ENCODE measurements at regions of chr6 and their contacts with region 1.

Region 1: GRCh38 chr6:85678602-85679444 is 36.1 kb upstream of the SYNCRIP start:
- DNase-seq: peak; percentile 96
- ATAC-seq: peak; percentile 78
- H3K4me3 ChIP-seq: peak overlapping the region; percentile 88 to 97
- H3K27ac ChIP-seq: peak overlapping the region; percentile 89
- H3K4me1 ChIP-seq: peaks cover 10 to 56% of the 10 kb centered on the region in 2 experiments; a peak in 3 of 4 replicates
- H3K27me3 ChIP-seq: no peaks in the 10 kb centered on the region
- CTCF ChIP-seq: 0 out of 6 replicates have a peak, but pooled peaks of 1 of the 3 experiments have one; percentile 15
- POLR2A ChIP-seq: peak; percentile 100
- RAD21 ChIP-seq: no peak

Region 2: GRCh38 chr6:85354761-85355618 is 323.8 kb before region 1 on chr6:
- CTCF ChIA-PET with region 1: no interaction called
- POLR2A ChIA-PET with region 1: interaction called, 7 read pairs
- RAD21 ChIA-PET with region 1: no interaction called
- intact Hi-C with region 1: loop called (anchors 5 kb)
- DNase-seq: peak; percentile 57
- ATAC-seq: peak; percentile 94
- H3K4me3 ChIP-seq: no peak overlapping the region
- H3K27ac ChIP-seq: no peak overlapping the region
- H3K4me1 ChIP-seq: peaks cover 0 to 34% of the 10 kb centered on the region in 2 experiments; a peak in 2 of 4 replicates
- H3K27me3 ChIP-seq: no peaks in the 10 kb centered on the region
- CTCF ChIP-seq: peak; percentile 90 to 93 (median 91)
- POLR2A ChIP-seq: no peak
- RAD21 ChIP-seq: peak; percentile 96

Region 3: DNA sequence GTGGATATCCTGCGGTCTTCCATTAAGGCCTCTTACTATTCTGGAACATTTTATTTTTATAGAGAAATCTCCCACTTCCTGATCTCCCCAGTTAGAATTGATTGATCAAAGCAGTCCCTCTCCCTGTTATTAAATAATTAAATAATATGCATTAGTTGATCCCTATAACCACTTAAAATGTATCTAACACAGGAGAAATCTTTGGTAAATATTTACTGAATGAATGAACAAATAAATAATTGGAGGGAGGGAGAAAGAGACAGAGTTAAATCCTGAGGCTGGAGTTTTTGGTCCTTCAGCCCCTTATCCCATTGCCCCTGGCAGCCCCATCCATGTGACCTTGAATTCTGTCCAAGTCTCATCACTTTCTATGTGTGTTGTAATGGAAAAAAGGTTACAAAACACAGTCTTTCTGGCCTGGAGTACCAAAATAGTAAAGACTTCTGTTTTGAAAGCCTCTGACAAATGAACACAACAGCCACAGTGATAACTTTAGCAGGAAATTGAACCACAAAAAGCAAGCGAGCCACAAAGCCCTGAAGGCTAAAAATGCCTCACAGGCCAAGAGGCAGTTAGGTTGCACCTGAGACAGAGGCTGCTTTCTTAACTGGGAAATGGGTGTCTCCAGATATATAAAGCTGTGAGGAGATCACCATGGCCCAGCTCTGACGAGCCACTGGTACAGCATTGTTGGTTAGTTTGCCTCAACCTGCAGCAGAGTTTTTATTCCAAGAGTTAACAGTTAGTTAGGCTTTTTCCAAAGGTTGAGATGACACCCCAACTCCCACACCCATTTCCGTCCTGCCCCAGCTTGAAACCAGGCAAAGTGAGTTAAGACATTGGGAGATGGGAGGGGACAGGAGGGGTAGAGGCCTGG is 217.7 kb before region 1 on chr6:
- CTCF ChIA-PET with region 1: no interaction called
- POLR2A ChIA-PET with region 1: interaction called, 8 read pairs
- RAD21 ChIA-PET with region 1: no interaction called
- intact Hi-C with region 1: loop called (anchors 10 kb)
- DNase-seq: no peak
- ATAC-seq: no peak
- H3K4me3 ChIP-seq: no peak overlapping the region
- H3K27ac ChIP-seq: no peak overlapping the region
- H3K4me1 ChIP-seq: peaks cover 61 to 100% of the 10 kb centered on the region in 2 experiments
- H3K27me3 ChIP-seq: no peaks in the 10 kb centered on the region
- CTCF ChIP-seq: no peak
- POLR2A ChIP-seq: no peak
- RAD21 ChIP-seq: no peak

Region 4: DNA sequence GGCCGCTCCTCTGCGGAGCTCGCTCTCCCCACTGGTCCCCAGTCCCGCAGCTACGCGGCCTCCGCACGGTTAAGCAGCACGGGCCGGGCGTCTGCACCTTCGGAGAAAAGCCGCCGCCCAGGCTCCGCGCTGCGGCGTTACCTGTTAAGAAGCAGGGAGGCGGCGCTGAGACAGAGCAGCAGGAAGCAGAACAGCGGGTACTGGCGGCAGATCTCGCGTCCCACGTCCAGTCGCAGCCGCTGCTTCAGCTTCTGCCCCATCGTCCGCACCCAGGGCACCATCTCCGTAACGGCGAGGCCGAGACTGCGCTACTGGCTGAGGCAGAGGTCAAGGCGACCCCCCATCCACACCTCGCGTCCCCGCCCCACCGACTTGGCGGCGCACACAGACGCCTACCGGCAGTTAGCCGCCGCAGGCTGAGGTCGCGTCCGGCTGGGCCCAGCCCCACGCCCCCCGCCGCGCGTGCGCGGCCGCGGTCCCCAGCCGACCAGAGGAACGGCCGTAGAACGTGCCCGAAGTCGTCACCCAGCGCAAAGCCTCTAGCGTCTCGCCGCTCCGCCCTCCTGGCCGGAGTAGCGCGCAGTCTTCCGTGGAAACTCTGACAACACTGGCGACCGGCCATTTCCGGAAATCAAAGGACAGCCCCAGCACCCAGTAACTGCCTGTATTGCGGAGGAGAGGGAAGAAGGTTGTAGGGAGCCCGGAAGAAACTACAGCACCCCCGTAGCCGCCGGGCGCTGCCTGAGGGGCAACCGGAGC is 85.2 kb before region 1 on chr6 and contains the start of gene SNX14:
- CTCF ChIA-PET with region 1: no interaction called
- POLR2A ChIA-PET with region 1: interaction called, 3 read pairs
- RAD21 ChIA-PET with region 1: no interaction called
- intact Hi-C with region 1: loop called (anchors 5 kb)
- DNase-seq: peak; percentile 92
- ATAC-seq: peak; percentile 93
- H3K4me3 ChIP-seq: peak within 1 kb of the TSS; percentile 75 to 88
- H3K27ac ChIP-seq: peak within 1 kb of the TSS; percentile 90
- H3K4me1 ChIP-seq: peaks cover 4 to 17% of the 10 kb centered on the region in 2 experiments; a peak in 3 of 4 replicates
- H3K27me3 ChIP-seq: no peaks in the 10 kb centered on the region
- CTCF ChIP-seq: no peak
- POLR2A ChIP-seq: peak; percentile 68
- RAD21 ChIP-seq: no peak
- total RNA-seq, gene SNX14: 84.8 TPM

Region 5: DNA sequence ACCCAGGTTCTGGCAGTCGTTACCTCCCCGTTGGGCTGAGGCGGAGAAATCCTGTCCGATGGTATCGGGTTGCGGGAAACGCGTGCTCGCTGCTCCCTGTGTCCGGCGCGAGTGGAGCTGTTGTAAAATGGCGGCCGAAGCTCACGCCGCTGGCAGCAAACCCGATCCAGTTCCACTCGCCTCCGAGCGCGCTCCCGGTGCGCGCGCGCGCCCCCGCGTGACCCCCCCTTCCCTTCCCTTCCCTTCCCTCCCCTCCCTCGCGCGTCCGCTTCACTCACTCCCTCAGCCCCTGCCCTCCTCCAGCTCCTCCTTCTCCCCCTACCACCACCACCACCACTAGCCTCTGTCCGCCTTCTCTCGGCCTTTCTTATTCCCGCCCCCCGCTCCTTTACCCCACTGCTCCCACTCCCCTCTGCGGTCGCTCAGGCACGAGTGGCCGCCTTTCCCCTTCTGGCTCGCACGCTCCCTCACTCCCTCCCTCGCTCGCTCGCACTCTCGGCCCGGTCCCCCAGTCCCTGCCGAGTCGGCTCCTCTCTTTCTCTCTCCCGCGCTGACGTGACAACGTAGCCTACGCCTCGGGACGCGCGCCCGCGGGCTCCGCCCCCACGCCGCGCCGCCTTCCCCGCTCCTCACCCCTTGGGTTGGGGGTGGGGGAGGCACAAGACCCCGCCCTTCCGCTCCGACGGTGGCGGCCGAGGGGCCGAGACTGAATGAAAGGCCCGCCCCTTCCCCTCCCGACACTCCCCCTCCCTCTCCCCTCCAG is 35.9 kb before region 1 on chr6 and contains the start of gene SYNCRIP:
- CTCF ChIA-PET with region 1: no interaction called
- POLR2A ChIA-PET with region 1: interaction called, 192 read pairs
- RAD21 ChIA-PET with region 1: interaction called, 3 to 4 read pairs
- intact Hi-C with region 1: loop called (anchors 1 kb)
- DNase-seq: peak; percentile 94
- ATAC-seq: peak; percentile 81
- H3K4me3 ChIP-seq: peak within 1 kb of the TSS; percentile 98 to 99
- H3K27ac ChIP-seq: peak within 1 kb of the TSS; percentile 99
- H3K4me1 ChIP-seq: peaks cover 9 to 35% of the 10 kb centered on the region in 2 experiments; a peak in 3 of 4 replicates
- H3K27me3 ChIP-seq: no peaks in the 10 kb centered on the region
- CTCF ChIP-seq: no peak
- POLR2A ChIP-seq: peak; percentile 87
- RAD21 ChIP-seq: no peak
- total RNA-seq, gene SYNCRIP: 189 TPM

Region 6: GRCh38 chr6:85660181-85660611 is 18.6 kb before region 1 on chr6:
- CTCF ChIA-PET with region 1: no interaction called
- POLR2A ChIA-PET with region 1: interaction called, 20 read pairs
- RAD21 ChIA-PET with region 1: no interaction called
- intact Hi-C with region 1: no loop called
- DNase-seq: peak; percentile 72
- ATAC-seq: peak; percentile 98
- H3K4me3 ChIP-seq: peak overlapping the region; percentile 16 to 41; a peak in 3 of 4 replicates
- H3K27ac ChIP-seq: peak overlapping the region; percentile 27
- H3K4me1 ChIP-seq: peaks cover 6 to 13% of the 10 kb centered on the region in 2 experiments; a peak in 3 of 4 replicates
- H3K27me3 ChIP-seq: no peaks in the 10 kb centered on the region
- CTCF ChIP-seq: peak in 2 of 3 experiments; percentile 31 to 43; a peak in 3 of 6 replicates
- POLR2A ChIP-seq: no peak
- RAD21 ChIP-seq: peak; percentile 48

Region 7: DNA sequence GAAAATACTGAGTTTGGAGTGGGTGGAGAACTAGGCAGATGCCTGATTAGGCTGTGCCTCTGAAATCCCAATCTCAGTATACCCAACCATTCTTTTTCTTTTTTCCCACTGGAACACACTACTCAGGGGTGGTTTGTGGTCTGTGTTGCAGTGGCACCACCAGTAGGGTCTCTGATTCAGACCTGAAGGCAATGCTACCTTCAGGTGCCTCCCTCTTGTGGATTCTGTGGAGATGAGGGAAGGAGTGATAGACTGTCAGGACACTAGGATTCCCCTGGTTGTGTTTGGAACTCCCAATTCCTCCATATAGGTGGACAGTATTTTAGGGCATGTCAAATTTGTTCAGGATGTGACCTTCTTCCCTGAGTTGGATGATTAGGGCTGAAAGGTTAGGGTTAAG is 11.2 kb after region 1 on chr6:
- CTCF ChIA-PET with region 1: no interaction called
- POLR2A ChIA-PET with region 1: interaction called, 10 read pairs
- RAD21 ChIA-PET with region 1: no interaction called
- intact Hi-C with region 1: no loop called
- DNase-seq: no peak
- ATAC-seq: no peak
- H3K4me3 ChIP-seq: no peak overlapping the region
- H3K27ac ChIP-seq: no peak overlapping the region
- H3K4me1 ChIP-seq: no peaks in the 10 kb centered on the region
- H3K27me3 ChIP-seq: no peaks in the 10 kb centered on the region
- CTCF ChIP-seq: no peak
- POLR2A ChIP-seq: no peak
- RAD21 ChIP-seq: no peak